Calu3 (cell line): ENCODE measurements at regions of chr1 and their contacts with region 1.

Region 1: DNA sequence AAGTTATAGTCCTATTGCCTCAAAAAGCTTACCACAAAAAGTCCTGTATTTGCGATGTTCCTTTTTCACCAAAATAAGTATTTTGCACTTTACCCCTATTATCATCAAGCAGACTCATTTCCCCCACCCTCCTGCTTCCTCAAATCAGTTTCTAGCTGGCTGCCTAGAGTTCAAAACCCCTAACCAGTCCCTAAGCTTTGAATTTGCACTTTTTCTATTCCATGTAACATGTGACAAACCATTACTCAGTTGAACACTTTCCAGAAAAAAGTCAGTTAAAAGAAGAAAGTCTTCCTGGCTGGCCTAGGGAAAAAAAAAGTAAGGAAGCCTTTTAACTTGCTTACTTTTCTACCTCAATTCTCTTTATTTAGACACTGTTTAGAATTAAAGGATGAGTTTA is 8.2 kb downstream of the CEP170 start:
- DNase-seq: no peak
- H3K4me3 Mint-ChIP-seq: no peak overlapping the region
- H3K27ac Mint-ChIP-seq: no peak overlapping the region
- H3K4me1 Mint-ChIP-seq: peaks cover 39% of the 10 kb centered on the region
- H3K27me3 Mint-ChIP-seq: no peaks in the 10 kb centered on the region
- CTCF ChIP-seq: no peak

Region 2: GRCh38 chr1:243213045-243213787 is 33.7 kb before region 1 on chr1:
- CTCF ChIA-PET with region 1: no interaction called
- intact Hi-C with region 1: loop called (anchors 5 kb)
- DNase-seq: no peak
- H3K4me3 Mint-ChIP-seq: no peak overlapping the region
- H3K27ac Mint-ChIP-seq: peak overlapping the region; percentile 62
- H3K4me1 Mint-ChIP-seq: peaks cover 8% of the 10 kb centered on the region
- H3K27me3 Mint-ChIP-seq: no peaks in the 10 kb centered on the region
- CTCF ChIP-seq: no peak